Gastrocnemius medialis (tissue), 4 donors: ENCODE measurements at regions of chr20 and their contacts with region 1.

Region 1: GRCh38 chr20:9689041-9689440 is 149.8 kb downstream of the PAK5 start:
- DNase-seq: no peak
- ATAC-seq: no peak
- H3K4me3 ChIP-seq: no peak overlapping the region
- H3K27ac ChIP-seq: no peak overlapping the region
- H3K4me1 ChIP-seq: no peaks in the 10 kb centered on the region
- H3K27me3 ChIP-seq: no peaks in the 10 kb centered on the region
- CTCF ChIP-seq: no peak
- POLR2A ChIP-seq: no peak

Region 2: GRCh38 chr20:9565910-9566550 is 123.0 kb before region 1 on chr20:
- in situ Hi-C with region 1: no loop called
- intact Hi-C with region 1: no loop called
- DNase-seq: no peak
- ATAC-seq: no peak
- H3K4me3 ChIP-seq: no peak overlapping the region
- H3K27ac ChIP-seq: no peak overlapping the region
- H3K4me1 ChIP-seq: no peaks in the 10 kb centered on the region
- H3K27me3 ChIP-seq: no peaks in the 10 kb centered on the region
- CTCF ChIP-seq: no peak
- POLR2A ChIP-seq: no peak

Region 3: GRCh38 chr20:9792674-9793073 is 103.6 kb after region 1 on chr20:
- in situ Hi-C with region 1: loop called in 1 of 4 experiments (anchors 25 kb)
- intact Hi-C with region 1: no loop called
- DNase-seq: no peak
- ATAC-seq: no peak
- H3K4me3 ChIP-seq: no peak overlapping the region
- H3K27ac ChIP-seq: no peak overlapping the region
- H3K4me1 ChIP-seq: no peaks in the 10 kb centered on the region
- H3K27me3 ChIP-seq: no peaks in the 10 kb centered on the region
- CTCF ChIP-seq: no peak
- POLR2A ChIP-seq: no peak